Naive thymus-derived CD4-positive, alpha-beta T cell (primary cell): ENCODE measurements at regions of chr1 and their contacts with region 1.

Region 1: DNA sequence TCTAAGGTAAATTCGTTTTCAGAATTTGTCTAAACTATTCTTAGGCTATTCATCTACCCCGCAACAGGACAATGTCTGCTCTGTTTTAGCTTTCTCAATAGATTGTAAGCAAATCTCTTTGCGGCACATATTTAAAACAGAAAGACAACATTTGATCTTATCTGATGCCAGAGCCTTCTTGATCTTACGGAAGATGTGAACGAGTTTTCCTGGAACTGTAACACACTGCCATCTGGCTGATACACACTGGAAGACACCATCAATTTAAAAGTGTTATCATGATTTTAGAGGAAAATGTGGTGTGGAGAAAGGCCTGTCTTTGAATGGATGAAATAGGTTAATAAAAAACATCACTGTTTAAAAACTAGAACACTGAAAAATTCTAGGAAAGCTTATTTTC is 36.1 kb downstream of the COA6 start:
- DNase-seq: peak in 7 of 9 donors; percentile 44 to 80 (median 72)
- ATAC-seq: peak; percentile 81
- H3K4me3 ChIP-seq: peak overlapping the region; percentile 35
- H3K4me3 Mint-ChIP-seq: peak overlapping the region; percentile 64 to 89 (median 76)
- H3K27ac ChIP-seq: peak overlapping the region; percentile 83
- H3K27ac Mint-ChIP-seq: peak overlapping the region; percentile 91 to 99 (median 97)
- H3K4me1 ChIP-seq: peaks cover 0 to 48% of the 10 kb centered on the region in 2 donors
- H3K4me1 Mint-ChIP-seq: peaks cover 23 to 55% (median 49%) of the 10 kb centered on the region in 7 donors
- H3K27me3 ChIP-seq: no peaks in the 10 kb centered on the region
- H3K27me3 Mint-ChIP-seq: no peaks in the 10 kb centered on the region

Region 2: GRCh38 chr1:234212764-234213657 is 196.3 kb before region 1 on chr1:
- CTCF ChIA-PET with region 1: no interaction called
- POLR2A ChIA-PET with region 1: no interaction called
- intact Hi-C with region 1: loop called in 1 of 2 experiments (anchors 1 kb)
- DNase-seq: peak in 4 of 9 donors; percentile 28 to 49 (median 36)
- ATAC-seq: peak; percentile 36
- H3K4me3 ChIP-seq: no peak overlapping the region
- H3K4me3 Mint-ChIP-seq: peak overlapping the region; percentile 21 to 85 (median 80)
- H3K27ac ChIP-seq: no peak overlapping the region
- H3K27ac Mint-ChIP-seq: peak overlapping the region in 4 of 9 donors; percentile 14 to 43 (median 32)
- H3K4me1 ChIP-seq: peaks cover 0 to 17% of the 10 kb centered on the region in 2 donors
- H3K4me1 Mint-ChIP-seq: peaks cover 0 to 39% (median 22%) of the 10 kb centered on the region in 7 donors
- H3K27me3 ChIP-seq: no peaks in the 10 kb centered on the region
- H3K27me3 Mint-ChIP-seq: peaks cover 8 to 59% (median 25%) of the 10 kb centered on the region in 5 donors

Region 3: GRCh38 chr1:234393190-234393589 is 16.1 kb before region 1 on chr1:
- CTCF ChIA-PET with region 1: interaction called, 46 read pairs
- POLR2A ChIA-PET with region 1: interaction called, 69 read pairs
- intact Hi-C with region 1: loop called (anchors 1 to 2 kb)
- DNase-seq: peak in 7 of 9 donors; percentile 25 to 69 (median 54)
- ATAC-seq: peak; percentile 75
- H3K4me3 ChIP-seq: no peak overlapping the region
- H3K4me3 Mint-ChIP-seq: no peak overlapping the region
- H3K27ac ChIP-seq: peak overlapping the region; percentile 32
- H3K27ac Mint-ChIP-seq: peak overlapping the region in 8 of 9 donors; percentile 65 to 96 (median 85)
- H3K4me1 ChIP-seq: peaks cover 0 to 1% of the 10 kb centered on the region in 2 donors
- H3K4me1 Mint-ChIP-seq: peaks cover 8 to 32% (median 18%) of the 10 kb centered on the region in 7 donors
- H3K27me3 ChIP-seq: no peaks in the 10 kb centered on the region
- H3K27me3 Mint-ChIP-seq: no peaks in the 10 kb centered on the region

Region 4: GRCh38 chr1:234458352-234459017 is 49.2 kb after region 1 on chr1:
- CTCF ChIA-PET with region 1: no interaction called
- POLR2A ChIA-PET with region 1: no interaction called
- intact Hi-C with region 1: no loop called
- DNase-seq: no peak
- ATAC-seq: no peak
- H3K4me3 ChIP-seq: no peak overlapping the region
- H3K4me3 Mint-ChIP-seq: no peak overlapping the region
- H3K27ac ChIP-seq: no peak overlapping the region
- H3K27ac Mint-ChIP-seq: no peak overlapping the region
- H3K4me1 ChIP-seq: no peaks in the 10 kb centered on the region
- H3K4me1 Mint-ChIP-seq: no peaks in the 10 kb centered on the region
- H3K27me3 ChIP-seq: no peaks in the 10 kb centered on the region
- H3K27me3 Mint-ChIP-seq: no peaks in the 10 kb centered on the region

Region 5: GRCh38 chr1:234478481-234479309 is 69.4 kb after region 1 on chr1 and contains the start of gene TARBP1:
- CTCF ChIA-PET with region 1: no interaction called
- POLR2A ChIA-PET with region 1: no interaction called
- intact Hi-C with region 1: loop called in 1 of 2 experiments (anchors 2 kb)
- DNase-seq: peak; percentile 68 to 87 (median 83)
- ATAC-seq: peak; percentile 82
- H3K4me3 ChIP-seq: peak within 1 kb of the TSS; percentile 79
- H3K4me3 Mint-ChIP-seq: peak within 1 kb of the TSS; percentile 82 to 90 (median 90)
- H3K27ac ChIP-seq: peak within 1 kb of the TSS; percentile 75
- H3K27ac Mint-ChIP-seq: peak within 1 kb of the TSS; percentile 73 to 95 (median 85)
- H3K4me1 ChIP-seq: peaks cover 0 to 16% of the 10 kb centered on the region in 2 donors
- H3K4me1 Mint-ChIP-seq: peaks cover 14 to 44% (median 39%) of the 10 kb centered on the region in 7 donors
- H3K27me3 ChIP-seq: no peaks in the 10 kb centered on the region
- H3K27me3 Mint-ChIP-seq: peaks cover 0 to 19% (median 3%) of the 10 kb centered on the region in 5 donors
- total RNA-seq, gene TARBP1: 45.8 to 49.6 (median 47.5) TPM